ENCODE measurements at regions of chr17 and their contacts with region 1.

Region 1: GRCh38 chr17:63919311-63919723 is 678 bp upstream of the GH1 start:
- DNase-seq: peak; percentile 81
- ATAC-seq: peak; percentile 96
- H3K4me3 Mint-ChIP-seq: no peak overlapping the region
- H3K27ac Mint-ChIP-seq: no peak overlapping the region
- H3K4me1 Mint-ChIP-seq: peaks cover 5% of the 10 kb centered on the region
- H3K27me3 Mint-ChIP-seq: peaks cover 11% of the 10 kb centered on the region

Region 2: GRCh38 chr17:63931099-63931561 is 11.8 kb after region 1 on chr17:
- CTCF ChIA-PET with region 1: interaction called, 25 read pairs
- DNase-seq: peak; percentile 82
- ATAC-seq: peak; percentile 88
- H3K4me3 Mint-ChIP-seq: peak overlapping the region; percentile 81
- H3K27ac Mint-ChIP-seq: peak overlapping the region; percentile 86
- H3K4me1 Mint-ChIP-seq: peaks cover 20% of the 10 kb centered on the region
- H3K27me3 Mint-ChIP-seq: peaks cover 7% of the 10 kb centered on the region

Region 3: DNA sequence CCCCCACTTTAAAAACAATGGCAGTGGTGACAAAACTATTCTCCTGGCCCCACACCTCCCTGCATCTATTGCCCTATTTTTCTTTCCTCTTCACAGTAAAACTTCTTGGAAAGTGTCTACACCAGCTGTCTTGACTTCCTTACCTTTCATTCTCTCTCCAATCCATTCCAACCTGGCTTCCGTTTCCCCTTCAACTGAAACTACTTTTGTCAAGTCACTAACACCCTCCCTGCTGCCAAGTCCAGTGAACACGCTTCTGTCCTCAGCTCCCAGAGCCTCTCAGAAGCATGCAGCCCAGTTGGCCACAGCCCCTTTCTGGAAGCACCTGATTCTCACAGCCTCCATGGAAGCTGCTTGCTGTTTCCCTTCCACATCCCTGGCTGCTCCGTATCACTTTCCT is 57.4 kb after region 1 on chr17:
- CTCF ChIA-PET with region 1: interaction called, 10 read pairs
- DNase-seq: no peak
- ATAC-seq: no peak
- H3K4me3 Mint-ChIP-seq: no peak overlapping the region
- H3K27ac Mint-ChIP-seq: no peak overlapping the region
- H3K4me1 Mint-ChIP-seq: peaks cover 13% of the 10 kb centered on the region
- H3K27me3 Mint-ChIP-seq: peaks cover 15% of the 10 kb centered on the region

Region 4: DNA sequence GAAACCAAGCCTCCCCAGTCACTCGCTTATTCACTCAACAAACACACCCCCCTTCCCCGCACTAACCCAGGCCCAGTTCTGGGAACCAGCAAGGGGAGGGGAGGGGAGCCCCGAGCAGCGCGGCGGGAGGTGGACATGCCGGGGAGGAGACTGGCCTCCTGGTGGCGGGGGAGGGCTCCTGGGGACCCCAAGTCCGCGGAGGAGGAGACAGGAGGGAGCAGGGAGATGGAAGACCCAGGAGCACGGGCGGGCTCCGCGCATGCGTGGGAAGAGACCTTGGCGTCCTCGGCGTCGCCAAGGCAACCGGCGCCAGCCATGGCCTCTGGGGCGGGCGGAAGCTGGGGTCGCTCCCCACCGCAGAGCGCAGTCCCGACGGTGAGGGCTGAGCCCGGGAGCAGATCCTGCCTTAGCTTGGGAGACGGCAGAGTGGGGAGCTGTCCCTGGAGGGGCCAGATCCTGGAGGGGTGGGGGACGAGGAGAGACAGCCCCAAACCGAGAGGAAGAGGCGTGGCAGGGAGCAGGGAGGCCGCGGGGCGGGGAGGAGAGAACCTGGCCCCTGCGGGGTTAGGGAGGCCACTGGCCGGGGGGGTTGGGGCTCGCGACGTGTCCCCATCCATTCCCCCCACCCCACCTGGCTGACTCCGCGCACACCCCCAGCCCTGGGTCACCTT is 78.9 kb after region 1 on chr17 and contains the start of gene PRR29:
- CTCF ChIA-PET with region 1: interaction called, 20 read pairs
- DNase-seq: peak; percentile 86
- ATAC-seq: peak; percentile 84
- H3K4me3 Mint-ChIP-seq: peak within 1 kb of the TSS; percentile 87
- H3K27ac Mint-ChIP-seq: peak within 1 kb of the TSS; percentile 33
- H3K4me1 Mint-ChIP-seq: peaks cover 32% of the 10 kb centered on the region
- H3K27me3 Mint-ChIP-seq: peaks cover 4% of the 10 kb centered on the region
- total RNA-seq, gene PRR29: 1.5 to 3.3 TPM